OCI-LY7 (cell line): ENCODE measurements at regions of chr1 and their contacts with region 1.

Region 1: GRCh38 chr1:204565617-204566582 is 49.7 kb downstream of the MDM4 start:
- DNase-seq: peak; percentile 90
- H3K4me3 ChIP-seq: peak overlapping the region; percentile 10
- H3K27ac ChIP-seq: peak overlapping the region; percentile 77
- H3K4me1 ChIP-seq: peaks cover 40% of the 10 kb centered on the region
- CTCF ChIP-seq: peak; percentile 90

Region 2: GRCh38 chr1:204446370-204447111 is 119.4 kb before region 1 on chr1:
- CTCF ChIA-PET with region 1: no interaction called
- POLR2A ChIA-PET with region 1: interaction called, 5 read pairs
- intact Hi-C with region 1: loop called (anchors 10 kb)
- DNase-seq: peak; percentile 88
- H3K4me3 ChIP-seq: no peak overlapping the region
- H3K27ac ChIP-seq: no peak overlapping the region
- H3K4me1 ChIP-seq: peaks cover 30% of the 10 kb centered on the region
- CTCF ChIP-seq: peak; percentile 83

Region 3: GRCh38 chr1:204578867-204579664 is 13.2 kb after region 1 on chr1:
- CTCF ChIA-PET with region 1: interaction called, 11 read pairs
- POLR2A ChIA-PET with region 1: interaction called, 17 read pairs
- intact Hi-C with region 1: no loop called
- DNase-seq: peak; percentile 68
- H3K4me3 ChIP-seq: peak overlapping the region; percentile 64
- H3K27ac ChIP-seq: peak overlapping the region; percentile 77
- H3K4me1 ChIP-seq: peaks cover 55% of the 10 kb centered on the region
- CTCF ChIP-seq: no peak

Region 4: GRCh38 chr1:204714861-204715511 is 149.1 kb after region 1 on chr1:
- CTCF ChIA-PET with region 1: interaction called, 3 read pairs
- POLR2A ChIA-PET with region 1: no interaction called
- intact Hi-C with region 1: loop called (anchors 5 kb)
- DNase-seq: peak; percentile 65
- H3K4me3 ChIP-seq: peak overlapping the region; percentile 62
- H3K27ac ChIP-seq: peak overlapping the region; percentile 62
- H3K4me1 ChIP-seq: peaks cover 72% of the 10 kb centered on the region
- CTCF ChIP-seq: peak; percentile 73